Ovary (tissue), 10 donors: ENCODE measurements at regions of chr2 and their contacts with region 1.

Region 1: GRCh38 chr2:50658883-50659282 is 373.0 kb downstream of the NRXN1 start:
- DNase-seq: no peak
- H3K4me3 ChIP-seq: no peak overlapping the region
- H3K27ac ChIP-seq: no peak overlapping the region
- H3K4me1 ChIP-seq: no peaks in the 10 kb centered on the region
- H3K27me3 ChIP-seq: no peaks in the 10 kb centered on the region
- CTCF ChIP-seq: no peak
- EP300 ChIP-seq: no peak
- POLR2A ChIP-seq: no peak

Region 2: DNA sequence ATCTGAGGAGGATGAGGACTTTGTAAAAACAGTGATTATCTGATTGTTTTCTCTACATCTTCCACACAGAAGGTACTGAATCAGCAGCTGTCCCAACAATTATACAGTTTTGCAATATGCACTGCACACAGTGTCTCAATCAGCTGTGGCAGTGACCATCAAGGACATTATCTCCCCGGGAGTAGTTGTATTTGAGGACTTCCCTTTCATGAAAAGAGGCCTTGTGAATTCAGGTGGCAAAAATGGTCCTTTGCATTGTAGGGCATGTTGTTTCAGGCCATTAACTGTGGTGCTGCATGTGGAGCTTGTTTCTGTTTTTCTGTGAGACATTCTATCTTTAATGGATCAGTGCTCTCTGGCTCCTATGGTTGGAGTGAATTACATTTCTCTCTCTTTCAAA is 725.2 kb before region 1 on chr2:
- intact Hi-C with region 1: loop called in 1 of 4 experiments (anchors 5 kb)
- DNase-seq: no peak
- H3K4me3 ChIP-seq: no peak overlapping the region
- H3K27ac ChIP-seq: no peak overlapping the region
- H3K4me1 ChIP-seq: no peaks in the 10 kb centered on the region
- H3K27me3 ChIP-seq: no peaks in the 10 kb centered on the region
- CTCF ChIP-seq: no peak
- EP300 ChIP-seq: no peak
- POLR2A ChIP-seq: no peak